Calu3 (cell line): ENCODE measurements at regions of chr10 and their contacts with region 1.

Region 1: GRCh38 chr10:80253266-80254245 is 35.9 kb downstream of the MAT1A start:
- DNase-seq: no peak
- H3K4me3 Mint-ChIP-seq: no peak overlapping the region
- H3K27ac Mint-ChIP-seq: no peak overlapping the region
- H3K4me1 Mint-ChIP-seq: peaks cover 8% of the 10 kb centered on the region
- H3K27me3 Mint-ChIP-seq: peaks cover 54% of the 10 kb centered on the region
- CTCF ChIP-seq: no peak

Region 2: DNA sequence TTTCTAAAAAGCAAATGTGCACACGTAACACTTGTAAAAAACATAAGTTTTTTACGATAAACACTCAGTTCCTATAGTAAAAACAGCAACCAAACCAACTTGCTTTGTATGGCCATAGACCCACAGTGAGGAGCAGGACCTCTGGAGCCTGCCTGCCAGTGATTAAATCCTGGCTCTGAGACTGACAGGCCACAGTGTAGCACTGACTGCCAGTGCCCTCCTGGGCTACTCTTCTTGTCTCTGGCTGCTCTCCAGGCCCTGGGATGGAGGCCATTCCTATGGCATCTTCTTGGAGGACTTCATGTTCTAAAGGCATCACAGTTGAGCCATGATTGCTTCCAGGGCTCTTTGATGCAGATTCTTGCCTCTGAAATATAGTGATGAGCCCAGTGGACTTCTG is 197.8 kb before region 1 on chr10:
- CTCF ChIA-PET with region 1: no interaction called
- intact Hi-C with region 1: loop called (anchors 10 kb)
- DNase-seq: no peak
- H3K4me3 Mint-ChIP-seq: no peak overlapping the region
- H3K27ac Mint-ChIP-seq: no peak overlapping the region
- H3K4me1 Mint-ChIP-seq: no peaks in the 10 kb centered on the region
- H3K27me3 Mint-ChIP-seq: no peaks in the 10 kb centered on the region
- CTCF ChIP-seq: no peak